ENCODE measurements at regions of chr11 and their contacts with region 1.

Region 1: GRCh38 chr11:13772223-13773046 is 104.0 kb downstream of the FAR1 start:
- DNase-seq: peak in 7 of 9 donors; percentile 61 to 80 (median 75)
- ATAC-seq: peak; percentile 79
- H3K4me3 ChIP-seq: no peak overlapping the region
- H3K4me3 Mint-ChIP-seq: no peak overlapping the region
- H3K27ac ChIP-seq: no peak overlapping the region
- H3K27ac Mint-ChIP-seq: no peak overlapping the region
- H3K4me1 ChIP-seq: no peaks in the 10 kb centered on the region
- H3K4me1 Mint-ChIP-seq: peaks cover 0 to 9% (median 5%) of the 10 kb centered on the region in 7 donors
- H3K27me3 ChIP-seq: no peaks in the 10 kb centered on the region
- H3K27me3 Mint-ChIP-seq: peaks cover 0 to 44% (median 4%) of the 10 kb centered on the region in 5 donors

Region 2: DNA sequence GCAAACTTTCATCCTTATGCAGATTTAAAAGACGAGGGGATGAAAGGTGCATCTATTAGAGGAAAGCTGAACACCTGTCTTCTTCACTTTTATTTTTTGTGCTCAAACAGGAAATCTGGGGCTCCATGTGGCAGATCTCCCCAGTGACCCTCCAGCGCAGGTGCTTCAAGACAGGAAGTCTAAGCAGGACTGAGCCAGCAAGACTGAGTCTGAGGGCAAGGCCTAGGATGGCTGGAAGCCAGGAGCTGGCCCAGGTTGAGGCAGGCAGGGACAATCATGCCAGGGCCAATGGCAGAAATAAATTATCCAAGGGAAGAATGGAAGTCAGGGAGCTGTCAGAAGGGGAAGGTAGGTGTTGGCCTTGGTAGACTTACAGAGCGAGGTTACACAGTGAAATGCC is 89.0 kb after region 1 on chr11:
- CTCF ChIA-PET with region 1: interaction called, 6 read pairs
- POLR2A ChIA-PET with region 1: no interaction called
- intact Hi-C with region 1: loop called in 1 of 2 experiments (anchors 1 kb)
- DNase-seq: peak in 4 of 9 donors; percentile 11 to 19 (median 14)
- ATAC-seq: no peak
- H3K4me3 ChIP-seq: no peak overlapping the region
- H3K4me3 Mint-ChIP-seq: peak overlapping the region in 7 of 10 donors; percentile 6 to 66 (median 55)
- H3K27ac ChIP-seq: no peak overlapping the region
- H3K27ac Mint-ChIP-seq: peak overlapping the region in 8 of 9 donors; percentile 33 to 98 (median 71)
- H3K4me1 ChIP-seq: peaks cover 6 to 19% of the 10 kb centered on the region in 2 donors
- H3K4me1 Mint-ChIP-seq: peaks cover 20 to 33% (median 25%) of the 10 kb centered on the region in 7 donors
- H3K27me3 ChIP-seq: no peaks in the 10 kb centered on the region
- H3K27me3 Mint-ChIP-seq: no peaks in the 10 kb centered on the region

Region 3: DNA sequence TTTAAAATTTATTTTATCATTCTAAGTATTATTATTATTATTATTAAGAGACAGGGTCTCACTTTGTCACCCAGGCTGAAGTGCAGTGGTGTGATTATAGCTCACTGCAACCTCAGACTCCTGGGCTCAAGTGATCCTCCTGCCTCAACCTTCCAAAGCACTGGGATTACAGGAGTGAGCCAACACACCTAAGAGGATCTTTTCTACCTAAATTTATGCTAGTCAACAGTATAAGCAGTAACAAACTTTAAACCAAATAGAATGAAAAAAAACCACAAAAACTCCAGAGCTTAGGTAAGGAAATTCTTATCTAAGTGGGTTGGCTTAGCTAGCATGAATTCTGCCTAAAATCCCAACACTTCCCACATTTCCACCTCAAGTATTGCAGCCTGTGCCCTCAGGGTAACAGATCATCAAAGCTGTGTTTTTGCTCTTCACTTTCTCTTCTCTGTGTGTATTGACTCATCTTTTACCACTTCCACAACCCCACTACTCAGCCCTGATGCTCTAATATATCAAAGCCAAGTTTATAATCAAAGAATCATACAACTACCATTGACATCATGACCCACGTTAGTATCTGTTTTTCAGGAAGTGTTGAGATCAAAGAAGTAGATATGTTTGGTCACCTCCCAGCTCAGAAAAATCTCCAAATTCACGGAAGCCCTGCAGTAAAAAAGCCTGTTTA is 96.4 kb after region 1 on chr11:
- CTCF ChIA-PET with region 1: interaction called, 6 read pairs
- POLR2A ChIA-PET with region 1: no interaction called
- intact Hi-C with region 1: loop called in 1 of 2 experiments (anchors 1 kb)
- DNase-seq: peak in 7 of 9 donors; percentile 73 to 92 (median 88)
- ATAC-seq: peak; percentile 96
- H3K4me3 ChIP-seq: no peak overlapping the region
- H3K4me3 Mint-ChIP-seq: peak overlapping the region in 9 of 10 donors; percentile 2 to 70 (median 40)
- H3K27ac ChIP-seq: peak overlapping the region; percentile 87
- H3K27ac Mint-ChIP-seq: peak overlapping the region; percentile 86 to 97 (median 92)
- H3K4me1 ChIP-seq: peaks cover 9 to 19% of the 10 kb centered on the region in 2 donors
- H3K4me1 Mint-ChIP-seq: peaks cover 19 to 56% (median 43%) of the 10 kb centered on the region in 7 donors
- H3K27me3 ChIP-seq: no peaks in the 10 kb centered on the region
- H3K27me3 Mint-ChIP-seq: peaks cover 0 to 14% (median 0%) of the 10 kb centered on the region in 5 donors

Region 4: GRCh38 chr11:14148653-14149273 is 376.3 kb after region 1 on chr11:
- CTCF ChIA-PET with region 1: interaction called, 56 read pairs
- POLR2A ChIA-PET with region 1: no interaction called
- intact Hi-C with region 1: loop called (anchors 1 kb)
- DNase-seq: peak in 7 of 9 donors; percentile 26 to 66 (median 46)
- ATAC-seq: peak; percentile 75
- H3K4me3 ChIP-seq: no peak overlapping the region
- H3K4me3 Mint-ChIP-seq: no peak overlapping the region
- H3K27ac ChIP-seq: no peak overlapping the region
- H3K27ac Mint-ChIP-seq: peak overlapping the region in 1 of 9 donors; percentile 74
- H3K4me1 ChIP-seq: no peaks in the 10 kb centered on the region
- H3K4me1 Mint-ChIP-seq: peaks cover 0 to 5% (median 4%) of the 10 kb centered on the region in 7 donors
- H3K27me3 ChIP-seq: no peaks in the 10 kb centered on the region
- H3K27me3 Mint-ChIP-seq: peaks cover 0 to 20% (median 0%) of the 10 kb centered on the region in 5 donors

Region 5: DNA sequence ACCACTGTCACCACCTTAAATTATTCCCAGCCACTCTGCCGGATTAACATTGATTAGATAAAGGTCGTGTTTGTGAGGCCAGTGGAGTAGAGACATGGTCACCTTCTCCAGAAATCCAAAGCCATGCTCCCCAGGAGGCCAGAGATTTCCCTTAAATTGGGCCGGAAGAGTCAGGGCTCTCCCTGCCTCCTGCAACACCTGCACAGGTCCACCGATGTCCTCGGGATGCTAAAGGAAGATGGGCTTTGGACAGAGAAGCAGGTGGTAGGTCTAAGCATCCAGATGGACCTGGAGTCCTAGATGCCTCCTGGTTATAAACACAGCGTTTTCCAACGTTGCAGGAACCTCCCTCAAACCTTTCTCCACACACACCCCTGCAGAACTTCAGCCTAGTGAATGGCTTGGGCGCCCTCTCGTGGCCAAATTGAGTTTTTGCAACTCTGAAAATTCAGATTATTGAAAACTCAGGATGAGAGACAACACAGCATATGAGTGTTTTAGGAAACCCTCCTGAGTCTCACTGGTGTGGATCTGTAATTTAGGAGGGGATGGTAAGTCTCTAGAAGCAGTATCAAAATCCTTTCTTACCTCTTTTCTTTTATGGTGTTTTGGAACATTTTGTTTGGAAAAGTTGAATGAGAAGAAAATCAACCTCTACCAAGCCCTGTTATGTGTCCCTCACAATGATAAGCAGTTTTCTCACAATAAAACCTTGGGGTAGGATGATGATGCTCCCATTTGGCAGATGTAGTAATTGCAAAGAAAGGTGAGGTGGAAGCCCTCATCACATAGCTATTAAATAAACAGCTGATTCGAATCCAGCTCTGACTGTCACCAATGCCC is 476.9 kb after region 1 on chr11:
- CTCF ChIA-PET with region 1: interaction called, 37 read pairs
- POLR2A ChIA-PET with region 1: interaction called, 6 read pairs
- intact Hi-C with region 1: loop called (anchors 1 kb)
- DNase-seq: peak; percentile 42 to 77 (median 62)
- ATAC-seq: peak; percentile 75
- H3K4me3 ChIP-seq: peak overlapping the region; percentile 31
- H3K4me3 Mint-ChIP-seq: peak overlapping the region; percentile 46 to 77 (median 72)
- H3K27ac ChIP-seq: no peak overlapping the region
- H3K27ac Mint-ChIP-seq: peak overlapping the region in 2 of 9 donors; percentile 71 to 80
- H3K4me1 ChIP-seq: peaks cover 12 to 13% of the 10 kb centered on the region in 2 donors
- H3K4me1 Mint-ChIP-seq: peaks cover 13 to 28% (median 24%) of the 10 kb centered on the region in 7 donors
- H3K27me3 ChIP-seq: no peaks in the 10 kb centered on the region
- H3K27me3 Mint-ChIP-seq: peaks cover 0 to 22% (median 0%) of the 10 kb centered on the region in 5 donors

Region 6: DNA sequence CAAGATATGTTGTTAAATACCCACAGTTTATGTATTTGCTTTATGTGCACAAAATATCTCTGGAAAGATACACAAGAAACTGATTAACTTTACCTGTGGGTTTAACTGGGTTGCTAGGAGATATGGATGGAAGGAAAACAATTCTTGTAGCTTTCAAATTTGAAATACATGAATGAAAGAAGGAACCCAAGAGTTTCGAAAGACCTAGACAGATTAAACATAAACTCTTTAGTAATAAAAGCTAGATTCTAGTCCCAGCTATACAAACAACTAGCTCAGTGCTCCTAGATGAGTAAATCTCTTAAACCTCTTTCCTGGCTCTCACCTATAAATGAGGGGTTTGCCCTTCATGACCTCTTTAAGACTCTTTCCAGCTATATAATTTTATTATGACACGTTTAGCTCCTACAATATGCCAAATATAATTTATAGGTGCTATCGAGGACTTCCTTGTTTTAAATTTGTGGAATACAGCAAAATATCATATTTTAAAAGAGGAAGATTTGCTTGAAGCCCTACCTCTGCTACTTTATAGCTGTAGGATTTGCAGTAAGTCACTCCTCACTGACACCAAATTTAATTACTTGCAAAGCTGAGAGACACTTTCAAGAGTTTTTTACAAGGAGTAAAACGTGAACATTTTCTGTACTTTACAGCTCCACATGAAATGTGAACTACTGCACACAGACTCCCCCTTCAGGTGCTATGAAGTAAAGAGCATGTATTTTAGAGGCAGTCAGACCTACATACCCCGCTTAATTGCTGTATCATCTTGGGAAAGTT is 535.9 kb after region 1 on chr11:
- CTCF ChIA-PET with region 1: interaction called, 8 read pairs
- POLR2A ChIA-PET with region 1: no interaction called
- intact Hi-C with region 1: loop called in 1 of 2 experiments (anchors 1 kb)
- DNase-seq: peak in 6 of 9 donors; percentile 10 to 47 (median 24)
- ATAC-seq: peak; percentile 85
- H3K4me3 ChIP-seq: no peak overlapping the region
- H3K4me3 Mint-ChIP-seq: peak overlapping the region in 1 of 10 donors; percentile 5
- H3K27ac ChIP-seq: no peak overlapping the region
- H3K27ac Mint-ChIP-seq: no peak overlapping the region
- H3K4me1 ChIP-seq: peaks cover 0 to 27% of the 10 kb centered on the region in 2 donors
- H3K4me1 Mint-ChIP-seq: peaks cover 2 to 29% (median 5%) of the 10 kb centered on the region in 7 donors
- H3K27me3 ChIP-seq: no peaks in the 10 kb centered on the region
- H3K27me3 Mint-ChIP-seq: no peaks in the 10 kb centered on the region

Region 7: DNA sequence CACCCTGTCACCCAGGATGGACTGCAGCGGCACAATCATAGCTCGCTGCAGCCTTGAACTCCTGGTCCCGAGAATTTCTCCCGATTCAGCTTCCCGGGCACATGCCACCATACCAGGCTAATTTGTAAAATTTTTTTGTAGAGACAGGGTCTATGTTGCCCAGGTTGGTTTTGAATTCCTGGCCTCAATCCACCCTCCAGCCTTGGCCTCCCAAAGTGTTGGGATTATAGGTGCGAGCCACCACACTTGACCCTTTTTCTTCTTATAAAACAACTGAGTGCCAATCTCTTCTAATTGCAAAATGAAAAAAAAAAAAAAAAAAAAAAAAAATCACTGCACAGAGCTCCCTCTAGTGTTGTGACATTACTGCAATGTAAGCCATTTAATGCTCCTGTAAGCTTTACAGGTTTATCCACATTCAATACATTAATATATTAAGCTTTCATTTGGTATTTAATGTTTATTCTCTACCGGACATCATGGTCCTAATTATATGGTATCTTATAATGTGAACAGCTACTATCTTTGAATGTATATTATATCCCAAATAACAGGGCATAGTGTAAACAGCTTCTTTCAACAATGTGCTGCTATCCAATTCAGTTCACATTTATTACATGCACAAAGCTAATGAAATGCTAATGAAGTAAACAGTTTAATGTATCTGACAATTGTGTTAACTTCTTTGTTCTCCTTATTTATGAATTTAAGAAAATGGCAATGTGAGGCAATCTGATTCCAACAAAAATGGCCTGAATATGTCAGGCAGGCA is 682.6 kb after region 1 on chr11:
- CTCF ChIA-PET with region 1: interaction called, 9 read pairs
- POLR2A ChIA-PET with region 1: no interaction called
- intact Hi-C with region 1: loop called in 1 of 2 experiments (anchors 1 kb)
- DNase-seq: peak in 5 of 9 donors; percentile 4 to 22 (median 12)
- ATAC-seq: peak; percentile 67
- H3K4me3 ChIP-seq: no peak overlapping the region
- H3K4me3 Mint-ChIP-seq: no peak overlapping the region
- H3K27ac ChIP-seq: no peak overlapping the region
- H3K27ac Mint-ChIP-seq: peak overlapping the region in 4 of 9 donors; percentile 1 to 52 (median 46)
- H3K4me1 ChIP-seq: peaks cover 0 to 3% of the 10 kb centered on the region in 2 donors
- H3K4me1 Mint-ChIP-seq: peaks cover 0 to 10% (median 0%) of the 10 kb centered on the region in 7 donors
- H3K27me3 ChIP-seq: no peaks in the 10 kb centered on the region
- H3K27me3 Mint-ChIP-seq: no peaks in the 10 kb centered on the region